Body of pancreas (tissue), 4 donors: ENCODE measurements at regions of chr10 and their contacts with region 1.

Region 1: GRCh38 chr10:122298598-122299301 is 27.7 kb downstream of the BTBD16 start:
- DNase-seq: peak; percentile 79 to 83 (median 80)
- ATAC-seq: peak; percentile 96
- H3K4me3 ChIP-seq: no peak overlapping the region
- H3K27ac ChIP-seq: no peak overlapping the region
- H3K4me1 ChIP-seq: peaks cover 13% of the 10 kb centered on the region
- H3K27me3 ChIP-seq: no peaks in the 10 kb centered on the region
- CTCF ChIP-seq: peak; percentile 77 to 95 (median 91)
- POLR2A ChIP-seq: no peak

Region 2: GRCh38 chr10:122191936-122192541 is 106.7 kb before region 1 on chr10:
- intact Hi-C with region 1: no loop called
- DNase-seq: no peak
- ATAC-seq: no peak
- H3K4me3 ChIP-seq: no peak overlapping the region
- H3K27ac ChIP-seq: no peak overlapping the region
- H3K4me1 ChIP-seq: no peaks in the 10 kb centered on the region
- H3K27me3 ChIP-seq: no peaks in the 10 kb centered on the region
- CTCF ChIP-seq: no peak
- POLR2A ChIP-seq: no peak

Region 3: DNA sequence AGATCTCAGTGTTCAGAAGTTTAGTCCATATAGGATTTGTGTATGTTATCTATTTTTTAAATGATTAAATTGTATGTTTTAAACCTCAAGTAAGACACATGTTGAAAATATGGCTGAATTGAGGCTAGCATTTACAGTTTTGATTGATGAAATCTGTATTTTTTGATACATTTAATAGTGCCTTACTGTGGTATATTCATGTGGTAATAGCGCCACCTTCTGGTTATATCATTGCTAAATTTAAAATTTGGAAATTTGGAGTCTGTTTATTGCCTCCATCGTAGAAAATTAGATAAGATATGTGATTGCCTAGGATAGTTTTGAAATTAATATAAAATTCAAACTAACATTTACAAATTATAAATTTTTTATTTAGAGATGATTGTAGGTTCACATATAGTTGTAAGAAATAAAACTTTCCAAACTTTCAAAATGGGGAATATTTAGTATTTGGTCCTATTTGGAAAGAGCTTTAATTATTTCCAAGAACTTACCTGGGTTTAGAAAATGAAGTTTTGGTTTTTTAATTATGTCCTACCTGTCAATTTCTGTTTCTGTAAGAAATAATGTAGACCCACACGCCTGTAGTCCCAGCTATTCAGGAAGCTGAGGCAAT is 136.6 kb after region 1 on chr10:
- intact Hi-C with region 1: loop called (anchors 5 kb)
- DNase-seq: no peak
- ATAC-seq: peak; percentile 48
- H3K4me3 ChIP-seq: no peak overlapping the region
- H3K27ac ChIP-seq: no peak overlapping the region
- H3K4me1 ChIP-seq: no peaks in the 10 kb centered on the region
- H3K27me3 ChIP-seq: no peaks in the 10 kb centered on the region
- CTCF ChIP-seq: peak; percentile 23 to 78 (median 72)
- POLR2A ChIP-seq: no peak

Region 4: GRCh38 chr10:122565728-122566206 is 267.0 kb after region 1 on chr10:
- intact Hi-C with region 1: loop called (anchors 5 kb)
- DNase-seq: peak; percentile 79 to 88 (median 82)
- ATAC-seq: peak; percentile 78
- H3K4me3 ChIP-seq: no peak overlapping the region
- H3K27ac ChIP-seq: no peak overlapping the region
- H3K4me1 ChIP-seq: no peaks in the 10 kb centered on the region
- H3K27me3 ChIP-seq: no peaks in the 10 kb centered on the region
- CTCF ChIP-seq: peak; percentile 74 to 86 (median 83)
- POLR2A ChIP-seq: no peak

Region 5: DNA sequence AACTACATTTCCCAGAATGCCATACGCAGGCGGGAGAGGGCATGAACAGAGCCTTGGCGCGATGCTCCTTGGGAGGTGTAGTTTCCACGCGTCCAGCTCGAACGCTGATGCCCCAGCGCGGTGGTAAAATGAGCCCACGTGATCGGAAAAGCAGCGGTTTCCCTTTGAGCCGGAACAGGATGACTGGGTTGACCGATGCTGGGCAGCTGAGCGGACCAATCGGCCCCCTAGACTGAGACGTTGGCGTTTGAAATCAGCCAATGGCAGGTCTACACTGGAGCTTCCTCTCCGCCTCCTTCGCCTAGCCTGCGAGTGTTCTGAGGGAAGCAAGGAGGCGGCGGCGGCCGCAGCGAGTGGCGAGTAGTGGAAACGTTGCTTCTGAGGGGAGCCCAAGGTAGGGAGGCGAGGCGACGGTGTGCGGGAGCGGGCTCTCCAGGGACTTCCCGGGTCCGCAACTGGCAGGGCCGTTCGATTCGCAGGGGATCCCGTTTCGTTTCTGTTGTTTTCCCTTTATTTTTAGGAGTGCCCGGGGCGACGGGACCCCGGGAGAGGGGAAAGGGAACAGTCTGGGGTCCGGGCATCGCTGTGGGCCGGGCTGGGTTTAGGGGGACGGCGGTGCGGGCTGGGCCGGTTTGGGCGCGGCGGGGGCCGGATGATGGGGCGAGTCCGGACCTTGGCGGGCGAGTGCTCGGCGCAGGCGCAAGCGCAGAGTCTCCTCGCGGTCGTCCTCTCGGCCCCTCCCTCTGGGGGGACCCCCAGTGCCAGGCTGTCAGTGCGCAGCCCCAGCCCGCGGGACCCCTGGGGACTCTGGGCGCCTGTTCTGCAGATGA is 855.6 kb after region 1 on chr10 and contains the start of gene BUB3:
- intact Hi-C with region 1: no loop called
- DNase-seq: peak; percentile 97 to 99 (median 98)
- ATAC-seq: peak; percentile 98
- H3K4me3 ChIP-seq: peak within 1 kb of the TSS; percentile 73 to 92
- H3K27ac ChIP-seq: peak within 1 kb of the TSS; percentile 55 to 85 (median 78)
- H3K4me1 ChIP-seq: peaks cover 43% of the 10 kb centered on the region
- H3K27me3 ChIP-seq: peaks cover 0 to 31% of the 10 kb centered on the region in 2 donors
- CTCF ChIP-seq: peak in 5 of 7 experiments; percentile 13 to 57 (median 51)
- POLR2A ChIP-seq: peak; percentile 53 to 89 (median 85)
- total RNA-seq, gene BUB3: 39.4 to 51.1 TPM